Ovary (tissue), 10 donors: ENCODE measurements at regions of chr22 and their contacts with region 1.

Region 1: DNA sequence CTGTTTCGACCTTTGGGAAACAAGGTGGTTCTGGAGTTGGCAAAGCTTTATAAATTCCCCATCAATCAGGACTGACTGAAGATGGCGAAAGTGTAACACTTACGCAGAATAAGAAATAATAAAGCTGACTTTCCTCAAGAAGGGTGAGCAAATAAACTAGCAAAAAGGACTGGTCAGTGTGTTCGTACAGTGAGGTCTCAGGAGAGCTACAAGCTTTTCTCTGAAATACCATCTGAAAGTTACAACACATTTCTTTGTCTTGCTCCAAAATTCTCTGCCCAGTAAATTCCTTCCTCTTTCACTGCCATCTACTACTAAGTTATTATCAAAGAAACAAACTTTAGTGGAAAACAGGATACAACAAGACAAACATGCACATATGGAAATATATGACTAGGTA is 13.4 kb downstream of the PITPNB start:
- DNase-seq: no peak
- H3K4me3 ChIP-seq: no peak overlapping the region
- H3K27ac ChIP-seq: no peak overlapping the region
- H3K4me1 ChIP-seq: peaks cover 2% of the 10 kb centered on the region
- H3K27me3 ChIP-seq: no peaks in the 10 kb centered on the region
- CTCF ChIP-seq: no peak
- EP300 ChIP-seq: no peak
- POLR2A ChIP-seq: no peak

Region 2: DNA sequence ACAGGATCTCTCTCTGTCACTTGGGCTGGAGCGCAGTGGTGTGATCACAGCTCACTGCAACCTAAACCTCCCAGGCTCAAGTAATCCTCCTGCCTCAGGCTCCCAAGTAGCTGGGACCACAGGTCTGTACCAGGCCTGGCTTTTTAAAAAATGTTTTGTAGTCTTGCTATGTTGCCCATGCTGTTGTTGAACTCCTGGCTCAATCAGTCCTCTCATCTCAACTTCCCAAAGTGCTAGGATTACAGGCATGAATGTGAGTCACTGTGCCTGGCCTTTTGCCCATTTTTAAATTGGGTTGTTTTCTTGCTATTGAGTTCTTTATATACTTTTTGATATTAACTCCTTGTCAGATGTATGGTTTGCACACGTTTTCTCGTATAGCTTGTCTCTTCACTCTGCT is 46.4 kb after region 1 on chr22:
- intact Hi-C with region 1: no loop called
- DNase-seq: no peak
- H3K4me3 ChIP-seq: no peak overlapping the region
- H3K27ac ChIP-seq: no peak overlapping the region
- H3K4me1 ChIP-seq: no peaks in the 10 kb centered on the region
- H3K27me3 ChIP-seq: no peaks in the 10 kb centered on the region
- CTCF ChIP-seq: no peak
- EP300 ChIP-seq: no peak
- POLR2A ChIP-seq: no peak

Region 3: GRCh38 chr22:27980424-27981148 is 74.9 kb after region 1 on chr22:
- intact Hi-C with region 1: loop called in 1 of 4 experiments (anchors 5 kb)
- DNase-seq: no peak
- H3K4me3 ChIP-seq: no peak overlapping the region
- H3K27ac ChIP-seq: no peak overlapping the region
- H3K4me1 ChIP-seq: peaks cover 8% of the 10 kb centered on the region
- H3K27me3 ChIP-seq: no peaks in the 10 kb centered on the region
- CTCF ChIP-seq: no peak
- EP300 ChIP-seq: no peak
- POLR2A ChIP-seq: no peak

Region 4: GRCh38 chr22:28541137-28541536 is 635.5 kb after region 1 on chr22:
- intact Hi-C with region 1: no loop called
- DNase-seq: no peak
- H3K4me3 ChIP-seq: no peak overlapping the region
- H3K27ac ChIP-seq: no peak overlapping the region
- H3K4me1 ChIP-seq: no peaks in the 10 kb centered on the region
- H3K27me3 ChIP-seq: no peaks in the 10 kb centered on the region
- CTCF ChIP-seq: no peak
- EP300 ChIP-seq: no peak
- POLR2A ChIP-seq: no peak